Mucosa of descending colon (tissue), 3 donors: ENCODE measurements at regions of chr2 and their contacts with region 1.

Region 1: DNA sequence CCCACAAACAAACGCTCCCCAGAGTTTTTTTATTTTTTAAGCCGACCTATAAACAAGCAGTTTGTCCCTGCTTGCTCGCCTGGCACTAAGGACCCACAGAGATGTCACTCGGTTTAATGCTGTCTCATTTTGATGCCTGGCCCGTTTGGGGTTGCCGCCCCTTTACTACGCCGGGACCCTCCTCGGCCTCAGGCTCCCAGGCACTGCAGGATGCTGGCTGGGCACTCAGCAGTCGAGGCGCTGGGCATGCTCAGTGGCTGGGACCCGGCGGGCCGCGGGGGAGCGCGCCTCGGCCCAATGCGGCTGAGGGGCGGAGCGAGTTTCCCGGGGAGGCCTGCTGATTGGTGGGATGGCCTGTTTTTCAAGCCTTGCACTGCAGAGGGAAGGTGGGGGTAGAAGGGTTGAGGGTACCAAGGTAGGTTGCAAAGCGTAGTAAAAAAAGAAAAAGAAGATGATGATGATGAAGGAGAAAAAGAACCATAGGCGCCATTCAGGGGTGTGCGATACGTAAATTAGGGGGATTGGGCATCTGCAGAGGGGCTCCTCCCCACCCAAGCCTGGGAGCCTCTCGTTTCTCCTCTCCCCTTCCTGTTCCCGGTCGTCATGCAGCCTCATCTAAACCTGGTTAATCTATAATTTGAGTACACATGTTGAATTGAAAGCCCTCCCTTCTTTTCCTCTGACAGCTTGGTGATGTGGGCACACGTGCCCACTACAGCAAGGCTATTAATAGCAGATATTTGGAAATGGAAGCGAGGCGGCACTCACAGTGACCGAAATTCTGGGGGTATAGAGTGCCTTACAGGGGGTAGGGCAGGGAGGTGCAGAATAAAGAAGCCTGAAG is 1.5 kb upstream of the IRS1 start:
- DNase-seq: peak; percentile 89 to 92 (median 89)
- ATAC-seq: peak; percentile 77
- H3K4me3 ChIP-seq: no peak overlapping the region
- H3K4me1 ChIP-seq: peaks cover 15% of the 10 kb centered on the region
- CTCF ChIP-seq: no peak

Region 2: DNA sequence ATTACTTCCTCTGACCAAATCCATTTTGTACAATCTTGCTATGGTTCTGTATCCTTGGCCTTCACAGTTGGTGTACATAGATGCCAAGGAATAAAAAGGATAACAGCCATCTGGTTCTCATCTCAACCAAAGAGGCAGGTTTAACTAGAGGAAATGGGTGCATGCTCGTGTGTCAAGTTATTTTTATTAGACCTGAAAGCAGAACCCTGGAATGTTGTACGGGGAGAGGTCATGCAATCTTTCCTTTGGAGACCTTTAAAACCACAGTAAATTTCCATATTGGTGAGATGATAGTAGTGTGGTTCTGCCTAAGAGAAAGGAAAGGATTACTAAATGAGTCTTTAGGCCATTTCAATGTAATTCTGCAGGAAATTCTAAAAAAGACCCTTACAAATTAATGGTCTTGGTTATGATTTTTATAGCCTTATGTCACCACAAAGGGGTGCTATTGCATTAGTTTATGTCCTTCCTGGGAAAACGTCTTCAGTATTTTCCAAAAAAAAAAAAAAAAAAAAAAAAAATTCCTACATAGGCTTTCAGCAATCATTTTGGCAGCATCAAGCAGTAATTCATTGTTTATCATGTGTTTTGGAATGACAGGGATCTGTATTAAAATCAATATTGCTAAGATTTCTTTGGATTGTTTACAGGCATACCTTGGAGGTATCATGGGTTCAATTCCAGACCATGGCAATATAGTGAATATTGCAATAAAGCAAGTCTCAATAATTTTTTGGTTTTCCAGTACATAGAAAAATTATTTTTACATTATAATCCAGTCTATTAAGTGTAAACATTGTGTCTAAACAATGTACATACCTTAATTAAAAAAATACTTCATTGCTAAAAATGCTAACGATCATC is 1130.8 kb before region 1 on chr2:
- intact Hi-C with region 1: loop called in 1 of 2 experiments (anchors 5 kb)
- DNase-seq: no peak
- ATAC-seq: no peak
- H3K4me3 ChIP-seq: no peak overlapping the region
- H3K4me1 ChIP-seq: no peaks in the 10 kb centered on the region
- CTCF ChIP-seq: no peak

Region 3: GRCh38 chr2:225889446-225889850 is 911.7 kb before region 1 on chr2:
- intact Hi-C with region 1: loop called in 1 of 2 experiments (anchors 5 kb)
- DNase-seq: peak in 1 of 3 donors; percentile 41
- ATAC-seq: peak; percentile 40
- H3K4me3 ChIP-seq: no peak overlapping the region
- H3K4me1 ChIP-seq: no peaks in the 10 kb centered on the region
- CTCF ChIP-seq: no peak

Region 4: GRCh38 chr2:225989809-225990208 is 811.4 kb before region 1 on chr2:
- intact Hi-C with region 1: loop called in 1 of 2 experiments (anchors 5 kb)
- DNase-seq: no peak
- ATAC-seq: no peak
- H3K4me3 ChIP-seq: no peak overlapping the region
- H3K4me1 ChIP-seq: no peaks in the 10 kb centered on the region
- CTCF ChIP-seq: no peak